Left colon (tissue), 2 donors: ENCODE measurements at regions of chr10 and their contacts with region 1.

Region 1: GRCh38 chr10:110893559-110894179 is 21.9 kb downstream of the PDCD4 start:
- DNase-seq: no peak
- ATAC-seq: peak; percentile 65

Region 2: GRCh38 chr10:110746254-110746826 is 147.3 kb before region 1 on chr10:
- intact Hi-C with region 1: loop called (anchors 5 to 10 kb)
- DNase-seq: peak; percentile 61
- ATAC-seq: peak; percentile 90

Region 3: GRCh38 chr10:110803830-110804338 is 89.8 kb before region 1 on chr10:
- intact Hi-C with region 1: loop called in 1 of 2 experiments (anchors 5 kb)
- DNase-seq: peak; percentile 64 to 69
- ATAC-seq: peak; percentile 66